Posterior vena cava (tissue), 2 donors: ENCODE measurements at regions of chr3 and their contacts with region 1.

Region 1: GRCh38 chr3:153052096-153052460 is 109.9 kb upstream of the RAP2B start:
- DNase-seq: peak; percentile 88

Region 2: DNA sequence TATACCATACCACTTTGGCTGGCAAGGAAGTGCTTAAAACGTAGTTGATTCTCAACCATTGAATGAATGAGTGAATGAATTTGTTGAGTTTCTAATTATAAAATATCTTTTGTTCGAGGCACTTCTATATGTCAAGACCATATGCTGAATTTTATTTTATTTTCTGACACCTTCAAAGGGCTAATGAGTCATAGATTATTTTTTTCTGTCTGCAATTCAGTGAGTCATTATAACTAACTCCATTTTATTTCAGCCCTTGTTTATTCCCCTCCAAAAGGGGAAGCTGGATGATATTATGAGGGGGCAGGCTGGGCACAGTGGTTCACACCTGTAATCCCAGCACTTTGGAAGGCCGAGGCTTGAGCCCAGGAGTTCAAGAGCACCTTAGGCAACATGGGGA is 74.7 kb before region 1 on chr3:
- intact Hi-C with region 1: no loop called
- DNase-seq: no peak

Region 3: DNA sequence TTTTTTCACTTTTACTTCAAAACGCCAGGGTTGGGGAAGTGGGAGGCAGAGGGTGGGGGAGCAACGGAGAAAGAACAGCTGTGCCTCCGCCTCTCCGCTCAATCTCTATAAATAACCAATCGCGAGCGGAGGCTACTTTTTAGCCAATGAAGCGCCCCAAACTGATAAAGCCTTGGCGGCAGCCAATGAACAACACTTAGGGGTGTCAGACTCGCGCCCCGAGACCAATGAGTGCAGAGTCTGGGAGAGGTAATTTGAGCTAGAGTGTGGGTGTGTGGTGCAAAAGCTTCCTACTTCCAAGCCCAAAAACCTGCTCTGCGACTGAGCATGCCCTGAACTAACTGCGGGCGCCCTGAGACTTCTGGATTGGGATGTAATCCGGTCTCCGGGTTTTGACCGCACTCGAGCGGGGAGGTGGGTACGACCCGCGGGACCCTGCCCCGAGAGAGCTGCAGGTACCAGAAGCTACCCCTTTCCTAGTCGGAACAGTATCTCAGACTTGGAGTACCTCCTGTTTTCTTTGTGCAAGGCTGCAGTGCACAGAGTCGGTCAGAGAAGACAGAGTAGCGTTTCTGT is 109.1 kb after region 1 on chr3:
- intact Hi-C with region 1: loop called (anchors 10 kb)
- DNase-seq: peak; percentile 97